Caco-2 (cell line): ENCODE measurements at regions of chr15 and their contacts with region 1.

Region 1: DNA sequence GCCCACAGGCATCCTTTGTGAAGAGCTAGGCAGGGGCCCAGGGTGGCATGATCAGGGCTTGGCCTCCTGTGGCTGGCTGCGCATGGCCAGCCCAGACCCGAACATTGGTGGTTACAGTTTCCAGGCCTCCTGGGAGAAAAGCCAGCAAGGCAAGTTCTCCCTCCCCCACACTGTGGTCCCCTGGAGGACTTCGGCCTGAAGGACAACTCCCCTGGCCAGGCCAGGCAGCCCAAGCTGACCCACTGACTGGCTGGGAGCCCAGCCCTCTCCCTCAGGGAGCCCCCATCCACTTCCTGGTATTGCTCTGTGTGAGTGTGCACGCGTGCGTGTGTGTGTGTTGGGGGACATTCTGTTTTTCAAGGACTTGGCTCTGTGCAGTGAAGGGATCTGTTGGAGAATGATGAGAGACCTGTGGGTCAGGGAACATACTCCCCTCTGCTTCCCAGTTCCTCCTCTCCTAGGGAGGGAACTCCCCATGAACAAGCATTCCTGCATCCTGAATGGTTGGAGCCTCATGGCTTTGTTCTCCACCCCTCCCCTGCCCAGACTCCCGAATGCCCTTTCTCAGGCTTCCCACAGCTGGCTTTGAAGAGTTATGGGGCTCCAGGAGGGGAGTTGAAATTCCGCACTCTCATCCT is 29.5 kb downstream of the CORO2B start:
- DNase-seq: no peak
- H3K4me3 ChIP-seq: no peak overlapping the region
- H3K4me3 Mint-ChIP-seq: no peak overlapping the region
- H3K27ac Mint-ChIP-seq: peak overlapping the region; percentile 8
- H3K4me1 ChIP-seq: no peaks in the 10 kb centered on the region
- H3K4me1 Mint-ChIP-seq: no peaks in the 10 kb centered on the region
- H3K27me3 ChIP-seq: no peaks in the 10 kb centered on the region
- H3K27me3 Mint-ChIP-seq: peaks cover 3% of the 10 kb centered on the region
- CTCF ChIP-seq: no peak

Region 2: GRCh38 chr15:69141286-69141701 is 533.0 kb after region 1 on chr15:
- CTCF ChIA-PET with region 1: no interaction called
- POLR2A ChIA-PET with region 1: no interaction called
- intact Hi-C with region 1: loop called (anchors 5 kb)
- DNase-seq: no peak
- H3K4me3 ChIP-seq: no peak overlapping the region
- H3K4me3 Mint-ChIP-seq: no peak overlapping the region
- H3K27ac Mint-ChIP-seq: no peak overlapping the region
- H3K4me1 ChIP-seq: 0 out of 2 replicates have a peak, but pooled peaks cover 2% of the 10 kb centered on the region
- H3K4me1 Mint-ChIP-seq: peaks cover 7% of the 10 kb centered on the region
- H3K27me3 ChIP-seq: peaks cover 1% of the 10 kb centered on the region; the same call in 1 of the 2 replicates
- H3K27me3 Mint-ChIP-seq: peaks cover 14% of the 10 kb centered on the region
- CTCF ChIP-seq: peak in 1 of 2 experiments; percentile 35